ENCODE measurements at regions of chr6 and their contacts with region 1.

Region 1: GRCh38 chr6:125114248-125114858 is 39.2 kb upstream of the TPD52L1 start:
- DNase-seq: peak in 25 of 35 experiments; percentile 6 to 64 (median 22)
- ATAC-seq: no peak
- H3K4me3 ChIP-seq: no peak overlapping the region
- H3K4me3 Mint-ChIP-seq: no peak overlapping the region
- H3K27ac ChIP-seq: no peak overlapping the region
- H3K27ac Mint-ChIP-seq: no peak overlapping the region
- H3K4me1 ChIP-seq: no peaks in the 10 kb centered on the region
- H3K4me1 Mint-ChIP-seq: no peaks in the 10 kb centered on the region
- H3K27me3 ChIP-seq: no peaks in the 10 kb centered on the region
- H3K27me3 Mint-ChIP-seq: peaks cover 0 to 1% of the 10 kb centered on the region in 2 donors

Region 2: DNA sequence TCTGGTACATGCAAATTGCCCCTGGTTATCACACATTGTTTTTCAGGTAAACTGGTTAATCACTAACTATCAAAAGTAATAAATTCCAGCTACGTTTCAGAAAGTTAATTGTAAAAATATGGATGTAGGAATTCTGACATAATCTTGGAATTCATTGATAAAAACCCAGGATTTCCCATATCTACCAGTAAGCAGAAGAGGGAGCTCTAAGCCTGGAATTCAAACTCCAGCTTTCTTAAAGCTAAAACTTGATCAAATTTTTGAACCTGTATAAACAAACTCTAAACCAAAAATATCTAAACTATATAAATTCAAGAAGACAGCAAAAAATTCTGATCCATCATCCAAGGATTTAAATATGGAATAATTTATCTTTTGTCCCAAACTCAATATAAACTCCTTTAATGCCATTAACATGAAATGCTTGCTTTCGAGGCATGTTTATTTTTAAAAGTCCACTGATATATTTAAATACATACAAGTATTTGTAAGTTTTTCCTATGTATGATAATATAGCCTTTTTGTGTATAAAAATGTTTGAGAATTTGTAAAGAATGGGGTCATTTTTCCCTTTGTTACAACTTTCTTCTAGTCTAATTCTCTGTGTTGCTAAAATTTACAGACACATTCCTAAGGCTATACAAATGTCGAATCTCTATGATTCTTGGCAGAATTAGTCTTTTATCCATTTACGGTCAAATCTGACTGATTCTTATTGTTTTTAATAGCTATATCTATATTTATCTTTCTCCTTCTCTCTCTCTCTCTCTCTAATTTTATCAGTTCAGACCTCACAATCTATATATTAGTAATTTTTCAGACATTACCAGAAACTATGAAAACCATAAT is 243.5 kb before region 1 on chr6:
- CTCF ChIA-PET with region 1: interaction called, 5 to 30 read pairs
- POLR2A ChIA-PET with region 1: no interaction called
- DNase-seq: peak in 1 of 35 experiments; percentile 23
- ATAC-seq: no peak
- H3K4me3 ChIP-seq: no peak overlapping the region
- H3K4me3 Mint-ChIP-seq: no peak overlapping the region
- H3K27ac ChIP-seq: no peak overlapping the region
- H3K27ac Mint-ChIP-seq: no peak overlapping the region
- H3K4me1 ChIP-seq: no peaks in the 10 kb centered on the region
- H3K4me1 Mint-ChIP-seq: no peaks in the 10 kb centered on the region
- H3K27me3 ChIP-seq: no peaks in the 10 kb centered on the region
- H3K27me3 Mint-ChIP-seq: peaks cover 0 to 2% of the 10 kb centered on the region in 2 donors

Region 3: DNA sequence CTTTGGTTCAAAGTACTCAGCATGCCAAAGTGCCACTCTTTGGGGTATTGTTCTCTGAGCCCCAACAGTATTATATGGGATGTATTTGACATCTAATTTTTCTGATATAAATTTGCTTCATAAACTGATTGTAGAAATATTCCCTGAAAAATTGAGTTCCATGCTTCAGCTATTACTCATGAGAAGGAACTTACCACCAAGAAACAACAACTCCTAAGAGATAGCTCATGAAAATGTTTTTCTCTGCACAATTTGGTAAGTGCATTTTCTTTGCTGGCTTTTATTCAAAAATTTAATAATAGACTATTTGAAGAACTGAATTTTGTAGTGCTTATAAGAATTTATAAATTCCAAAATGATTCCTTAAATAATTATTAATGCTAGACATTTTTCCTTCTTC is 26.5 kb after region 1 on chr6:
- CTCF ChIA-PET with region 1: no interaction called
- POLR2A ChIA-PET with region 1: no interaction called
- DNase-seq: no peak
- ATAC-seq: no peak
- H3K4me3 ChIP-seq: no peak overlapping the region
- H3K4me3 Mint-ChIP-seq: no peak overlapping the region
- H3K27ac ChIP-seq: no peak overlapping the region
- H3K27ac Mint-ChIP-seq: no peak overlapping the region
- H3K4me1 ChIP-seq: no peaks in the 10 kb centered on the region
- H3K4me1 Mint-ChIP-seq: no peaks in the 10 kb centered on the region
- H3K27me3 ChIP-seq: peaks cover 0 to 8% of the 10 kb centered on the region in 2 experiments
- H3K27me3 Mint-ChIP-seq: peaks cover 0 to under 1% of the 10 kb centered on the region in 2 donors

Region 4: DNA sequence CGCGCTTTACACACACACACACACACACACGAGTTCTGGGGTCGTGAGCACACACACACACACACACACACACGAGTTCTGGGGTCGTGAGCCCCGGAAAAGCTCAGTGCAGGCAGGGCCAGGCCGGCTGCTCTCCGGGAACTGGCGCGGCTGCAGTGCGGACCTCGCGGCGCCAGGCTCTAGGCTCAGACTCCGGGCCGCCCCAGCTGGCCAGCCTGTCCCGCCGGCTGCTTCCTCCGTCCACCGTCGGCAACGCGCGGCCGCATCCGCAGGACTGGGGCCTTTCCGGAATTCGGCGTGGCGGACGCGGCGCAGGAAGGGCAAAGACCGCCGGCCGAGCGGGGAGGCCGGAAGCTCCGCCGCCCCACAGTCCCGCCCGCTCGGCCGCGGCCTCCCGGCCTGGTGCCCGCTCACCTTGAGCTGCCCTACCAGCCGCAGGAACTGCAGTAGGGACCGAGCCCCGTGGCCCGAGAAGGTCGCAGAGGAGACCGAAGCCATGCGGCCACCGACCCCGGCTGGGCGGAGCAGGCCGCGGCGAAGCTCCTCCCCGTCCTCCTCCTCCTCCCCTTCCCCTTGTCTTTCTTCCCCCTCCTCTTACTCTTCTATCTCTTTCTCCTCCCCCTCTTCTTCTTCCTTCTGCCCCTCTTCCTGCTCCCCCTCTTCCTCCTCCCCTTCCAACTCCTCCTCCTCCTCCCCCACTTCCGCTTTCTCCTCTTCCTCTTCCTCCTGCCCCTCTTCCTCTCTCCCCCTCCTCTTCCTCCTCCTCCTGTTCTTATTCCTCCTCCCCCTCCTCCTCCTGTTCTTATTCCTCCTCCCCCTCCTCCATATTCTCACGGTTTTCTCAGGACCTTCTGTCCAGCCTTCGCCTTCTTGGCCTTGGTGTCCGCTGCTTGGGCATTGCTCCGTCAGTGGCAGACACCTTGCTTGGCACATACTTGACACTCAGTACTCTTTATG is 187.4 kb after region 1 on chr6 and contains the start of gene HDDC2:
- CTCF ChIA-PET with region 1: no interaction called
- POLR2A ChIA-PET with region 1: no interaction called
- DNase-seq: peak in 24 of 35 experiments; percentile 2 to 58 (median 20)
- ATAC-seq: peak; percentile 36 to 57 (median 55)
- H3K4me3 ChIP-seq: peak within 1 kb of the TSS; percentile 71 to 78
- H3K4me3 Mint-ChIP-seq: peak within 1 kb of the TSS; percentile 84 to 90 (median 84)
- H3K27ac ChIP-seq: peak within 1 kb of the TSS; percentile 81
- H3K27ac Mint-ChIP-seq: peak within 1 kb of the TSS; percentile 93 to 95
- H3K4me1 ChIP-seq: peaks cover 28 to 32% of the 10 kb centered on the region in 2 experiments
- H3K4me1 Mint-ChIP-seq: peaks cover 57 to 60% (median 57%) of the 10 kb centered on the region in 3 donors
- H3K27me3 ChIP-seq: no peaks in the 10 kb centered on the region
- H3K27me3 Mint-ChIP-seq: peaks cover 4 to 5% of the 10 kb centered on the region in 2 donors
- total RNA-seq, gene HDDC2: 32.0 to 48.0 (median 42.1) TPM